Naive thymus-derived CD8-positive, alpha-beta T cell (primary cell): ENCODE measurements at regions of chr12 and their contacts with region 1.

Region 1: DNA sequence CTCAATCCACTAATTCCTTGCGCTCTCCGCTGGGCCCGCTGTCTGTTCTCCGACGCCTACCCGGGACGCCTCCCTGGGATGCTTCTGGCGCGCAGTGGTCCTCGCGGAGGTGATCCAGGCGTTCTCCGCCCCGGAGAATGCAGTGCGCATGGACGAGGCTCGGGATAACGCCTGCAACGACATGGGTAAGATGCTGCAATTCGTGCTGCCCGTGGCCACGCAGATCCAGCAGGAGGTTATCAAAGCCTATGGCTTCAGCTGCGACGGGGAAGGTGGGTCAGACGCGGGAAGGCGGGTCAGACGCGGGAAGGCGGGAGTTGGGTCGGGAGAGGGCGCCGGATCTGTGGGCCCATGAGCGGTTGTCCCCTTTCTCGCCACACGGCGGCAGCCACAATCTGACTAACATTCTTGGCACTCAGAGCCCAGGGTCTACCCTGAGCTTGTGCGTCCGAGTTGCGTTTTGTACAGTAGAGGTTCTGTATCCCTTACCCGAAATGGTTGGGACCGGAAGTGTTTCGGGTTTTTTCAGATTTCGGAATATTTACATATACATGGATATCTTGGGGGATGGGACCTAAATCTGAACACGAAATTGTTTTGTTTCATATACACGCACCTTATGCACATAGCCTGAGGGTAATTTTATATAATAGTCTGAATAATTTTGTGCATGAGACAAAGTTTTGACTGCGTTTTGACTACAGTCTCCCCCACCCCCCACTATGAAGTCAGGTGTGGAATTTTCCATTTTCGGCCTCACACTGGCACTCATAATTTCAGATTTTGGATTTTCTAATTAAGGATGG is 762 bp downstream of the C12orf57 start:
- DNase-seq: peak; percentile 65 to 94 (median 84)
- ATAC-seq: peak; percentile 49 to 55
- H3K4me3 Mint-ChIP-seq: peak overlapping the region; percentile 93 to 99 (median 98)
- H3K27ac Mint-ChIP-seq: peak overlapping the region; percentile 97 to 100 (median 99)
- H3K4me1 Mint-ChIP-seq: peaks cover 32 to 78% (median 66%) of the 10 kb centered on the region in 4 donors
- H3K27me3 Mint-ChIP-seq: no peaks in the 10 kb centered on the region

Region 2: GRCh38 chr12:6867413-6868210 is 77.0 kb before region 1 on chr12 and contains the start of gene TPI1:
- POLR2A ChIA-PET with region 1: interaction called, 48 read pairs
- DNase-seq: peak in 9 of 10 donors; percentile 38 to 87 (median 60)
- ATAC-seq: peak; percentile 70 to 72
- H3K4me3 Mint-ChIP-seq: peak within 1 kb of the TSS; percentile 84 to 95 (median 88)
- H3K27ac Mint-ChIP-seq: peak within 1 kb of the TSS; percentile 84 to 96 (median 89)
- H3K4me1 Mint-ChIP-seq: peaks cover 33 to 62% (median 52%) of the 10 kb centered on the region in 4 donors
- H3K27me3 Mint-ChIP-seq: no peaks in the 10 kb centered on the region
- polyA plus RNA-seq, gene TPI1: 372 to 497 (median 479) TPM

Region 3: DNA sequence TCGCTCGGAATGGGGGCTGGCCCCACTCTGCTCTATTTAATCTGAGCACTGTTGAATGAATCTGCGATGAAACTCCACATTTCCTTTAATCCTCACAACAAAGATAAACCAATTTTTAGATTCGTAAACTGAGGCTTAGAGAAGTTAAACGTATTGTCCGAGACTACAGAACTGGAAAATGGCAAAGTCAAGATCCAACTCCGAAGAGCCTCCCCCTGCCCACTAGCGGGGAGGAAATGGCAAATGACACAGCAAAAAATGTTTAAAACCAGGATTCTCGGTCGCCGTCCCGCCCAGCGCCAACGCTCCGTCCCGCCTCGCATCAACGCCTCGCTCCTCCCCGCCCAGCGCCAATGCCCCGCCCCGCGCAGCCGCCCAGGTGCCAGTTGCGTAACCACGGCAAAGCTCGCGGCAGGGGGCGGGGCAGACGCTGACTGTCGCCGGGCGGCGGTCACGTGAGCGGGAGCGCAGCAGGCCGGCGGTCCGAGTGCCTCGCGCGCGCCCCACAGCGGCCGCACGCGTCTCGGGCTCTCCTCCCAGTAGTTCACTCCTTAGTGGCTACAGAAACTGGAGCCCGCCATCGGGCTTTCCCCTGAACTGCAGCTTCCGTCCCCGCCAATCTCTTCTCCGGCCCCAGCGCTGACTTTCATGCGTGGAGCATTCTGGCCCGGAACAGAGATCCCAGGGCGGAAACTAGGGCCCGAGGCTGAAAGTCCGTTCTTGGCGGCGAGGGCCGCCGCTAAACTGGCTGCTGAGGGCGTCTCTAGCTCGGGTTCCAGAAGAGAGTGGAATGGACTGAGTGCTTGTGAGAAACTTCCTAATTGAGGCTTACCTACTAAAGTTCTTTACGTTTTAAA is 53.6 kb before region 1 on chr12:
- POLR2A ChIA-PET with region 1: interaction called, 17 read pairs
- DNase-seq: peak; percentile 92 to 100 (median 97)
- ATAC-seq: peak; percentile 94 to 95
- H3K4me3 Mint-ChIP-seq: peak overlapping the region; percentile 77 to 90 (median 84)
- H3K27ac Mint-ChIP-seq: peak overlapping the region; percentile 88 to 96 (median 94)
- H3K4me1 Mint-ChIP-seq: peaks cover 0 to 17% (median 15%) of the 10 kb centered on the region in 4 donors
- H3K27me3 Mint-ChIP-seq: no peaks in the 10 kb centered on the region

Region 4: GRCh38 chr12:6914246-6914946 is 30.2 kb before region 1 on chr12 and contains the start of gene ENO2:
- POLR2A ChIA-PET with region 1: interaction called, 28 read pairs
- DNase-seq: peak; percentile 77 to 93 (median 82)
- ATAC-seq: peak; percentile 89 to 92
- H3K4me3 Mint-ChIP-seq: peak within 1 kb of the TSS; percentile 91 to 97 (median 94)
- H3K27ac Mint-ChIP-seq: peak within 1 kb of the TSS; percentile 87 to 98 (median 95)
- H3K4me1 Mint-ChIP-seq: peaks cover 16 to 52% (median 27%) of the 10 kb centered on the region in 4 donors
- H3K27me3 Mint-ChIP-seq: no peaks in the 10 kb centered on the region
- polyA plus RNA-seq, gene ENO2: 19.4 to 29.2 (median 19.7) TPM

Region 5: DNA sequence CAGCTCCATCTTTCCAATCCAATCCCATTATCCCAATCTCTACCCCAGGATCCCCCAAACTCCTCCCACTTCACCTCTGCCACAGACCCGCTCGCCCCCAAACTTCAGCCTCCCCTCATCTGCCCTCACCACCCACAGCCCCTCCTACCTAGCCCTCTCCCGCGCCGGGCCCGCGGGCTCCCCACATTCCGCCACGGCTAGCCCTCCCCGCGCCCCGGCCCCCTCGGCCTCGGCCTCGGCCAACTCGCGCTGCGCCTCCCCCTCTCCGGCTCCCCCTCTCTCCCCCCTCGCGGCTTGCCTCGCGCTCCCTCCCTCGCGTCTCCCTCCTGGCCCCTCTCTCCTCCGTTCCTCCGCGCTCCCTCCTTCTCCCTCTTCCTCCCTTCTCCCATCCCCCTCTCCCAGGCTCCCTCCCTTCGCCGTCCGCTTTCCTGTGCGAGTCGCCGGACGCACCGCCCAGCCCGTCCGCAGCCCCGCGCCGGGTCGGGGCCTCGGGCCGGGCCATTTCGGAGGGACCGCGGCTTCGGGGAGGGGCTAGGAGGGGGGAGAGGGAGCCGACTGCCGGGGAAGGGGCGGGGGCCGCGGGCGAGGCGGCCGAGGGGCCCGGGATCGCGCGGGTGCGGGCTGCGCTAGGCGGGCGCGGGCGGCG is 17.1 kb before region 1 on chr12 and contains the start of gene ATN1:
- POLR2A ChIA-PET with region 1: interaction called, 53 read pairs
- DNase-seq: peak in 5 of 10 donors; percentile 37 to 47 (median 43)
- ATAC-seq: peak; percentile 18 to 41
- H3K4me3 Mint-ChIP-seq: peak within 1 kb of the TSS; percentile 82 to 94 (median 90)
- H3K27ac Mint-ChIP-seq: peak within 1 kb of the TSS; percentile 91 to 96 (median 92)
- H3K4me1 Mint-ChIP-seq: peaks cover 35 to 60% (median 51%) of the 10 kb centered on the region in 4 donors
- H3K27me3 Mint-ChIP-seq: no peaks in the 10 kb centered on the region
- polyA plus RNA-seq, gene ATN1: 0.35 to 1.4 (median 1.1) TPM

Region 6: GRCh38 chr12:7018350-7019042 is 73.9 kb after region 1 on chr12 and contains the start of gene LPCAT3:
- POLR2A ChIA-PET with region 1: interaction called, 19 read pairs
- DNase-seq: peak; percentile 92 to 99 (median 98)
- ATAC-seq: peak; percentile 94 to 95
- H3K4me3 Mint-ChIP-seq: peak within 1 kb of the TSS; percentile 90 to 98 (median 94)
- H3K27ac Mint-ChIP-seq: peak within 1 kb of the TSS; percentile 81 to 97 (median 94)
- H3K4me1 Mint-ChIP-seq: peaks cover 20 to 40% (median 31%) of the 10 kb centered on the region in 4 donors
- H3K27me3 Mint-ChIP-seq: no peaks in the 10 kb centered on the region
- polyA plus RNA-seq, gene LPCAT3: 17.0 to 22.7 (median 19.9) TPM

Region 7: DNA sequence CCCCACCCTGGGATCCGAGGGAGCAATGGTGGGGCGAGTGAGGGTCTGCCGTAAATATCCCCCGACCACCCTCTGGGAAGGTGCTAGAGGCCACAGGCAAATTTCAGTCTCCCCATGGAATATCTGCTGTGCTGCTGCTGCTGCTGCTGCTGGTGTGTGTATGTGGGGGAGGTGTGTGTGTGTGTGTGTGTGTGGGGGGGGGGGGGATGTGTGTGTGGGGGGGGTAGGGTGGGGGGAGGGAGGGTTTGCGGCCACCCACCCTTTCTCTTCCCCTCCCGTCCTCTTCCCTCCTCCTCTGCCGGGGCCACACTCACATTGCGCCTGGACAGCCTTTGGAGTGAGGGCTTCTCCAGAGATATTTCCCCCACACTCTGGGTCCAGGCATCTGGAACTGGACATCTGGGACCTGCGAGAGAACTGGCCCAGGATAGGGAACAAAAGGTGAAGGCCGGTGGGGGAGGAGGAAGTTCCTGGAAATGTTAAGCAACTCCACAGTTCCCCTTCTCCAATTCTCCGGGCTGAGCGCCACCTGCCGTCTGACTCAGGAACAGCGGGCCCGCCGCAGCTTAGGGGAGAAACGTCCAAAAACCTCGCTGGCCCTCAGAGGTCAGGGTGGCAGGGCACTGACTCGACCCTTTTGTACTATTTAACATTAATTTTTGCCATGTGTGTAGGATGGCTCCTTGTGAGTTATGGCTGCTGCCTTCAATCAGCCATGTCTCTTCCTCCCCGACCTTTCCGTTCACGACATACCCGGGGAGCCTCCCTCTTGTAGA is 164.4 kb after region 1 on chr12 and contains the start of gene C1RL:
- POLR2A ChIA-PET with region 1: interaction called, 23 read pairs
- DNase-seq: peak; percentile 34 to 86 (median 74)
- ATAC-seq: peak; percentile 35 to 38
- H3K4me3 Mint-ChIP-seq: peak within 1 kb of the TSS; percentile 90 to 96 (median 94)
- H3K27ac Mint-ChIP-seq: peak within 1 kb of the TSS; percentile 89 to 97 (median 94)
- H3K4me1 Mint-ChIP-seq: peaks cover 26 to 51% (median 46%) of the 10 kb centered on the region in 4 donors
- H3K27me3 Mint-ChIP-seq: no peaks in the 10 kb centered on the region
- polyA plus RNA-seq, gene C1RL: 3.7 to 5.7 (median 4.8) TPM